Sigmoid colon (tissue), 7 donors: ENCODE measurements at regions of chr16 and their contacts with region 1.

Region 1: GRCh38 chr16:70746708-70747424 is 54.1 kb downstream of the VAC14 start:
- DNase-seq: peak; percentile 92
- H3K4me3 ChIP-seq: no peak overlapping the region
- H3K27ac ChIP-seq: peak overlapping the region; percentile 82 to 93 (median 87)
- H3K4me1 ChIP-seq: peaks cover 0 to 71% (median 69%) of the 10 kb centered on the region in 4 donors
- H3K27me3 ChIP-seq: no peaks in the 10 kb centered on the region
- CTCF ChIP-seq: no peak
- EP300 ChIP-seq: no peak
- POLR2A ChIP-seq: no peak

Region 2: DNA sequence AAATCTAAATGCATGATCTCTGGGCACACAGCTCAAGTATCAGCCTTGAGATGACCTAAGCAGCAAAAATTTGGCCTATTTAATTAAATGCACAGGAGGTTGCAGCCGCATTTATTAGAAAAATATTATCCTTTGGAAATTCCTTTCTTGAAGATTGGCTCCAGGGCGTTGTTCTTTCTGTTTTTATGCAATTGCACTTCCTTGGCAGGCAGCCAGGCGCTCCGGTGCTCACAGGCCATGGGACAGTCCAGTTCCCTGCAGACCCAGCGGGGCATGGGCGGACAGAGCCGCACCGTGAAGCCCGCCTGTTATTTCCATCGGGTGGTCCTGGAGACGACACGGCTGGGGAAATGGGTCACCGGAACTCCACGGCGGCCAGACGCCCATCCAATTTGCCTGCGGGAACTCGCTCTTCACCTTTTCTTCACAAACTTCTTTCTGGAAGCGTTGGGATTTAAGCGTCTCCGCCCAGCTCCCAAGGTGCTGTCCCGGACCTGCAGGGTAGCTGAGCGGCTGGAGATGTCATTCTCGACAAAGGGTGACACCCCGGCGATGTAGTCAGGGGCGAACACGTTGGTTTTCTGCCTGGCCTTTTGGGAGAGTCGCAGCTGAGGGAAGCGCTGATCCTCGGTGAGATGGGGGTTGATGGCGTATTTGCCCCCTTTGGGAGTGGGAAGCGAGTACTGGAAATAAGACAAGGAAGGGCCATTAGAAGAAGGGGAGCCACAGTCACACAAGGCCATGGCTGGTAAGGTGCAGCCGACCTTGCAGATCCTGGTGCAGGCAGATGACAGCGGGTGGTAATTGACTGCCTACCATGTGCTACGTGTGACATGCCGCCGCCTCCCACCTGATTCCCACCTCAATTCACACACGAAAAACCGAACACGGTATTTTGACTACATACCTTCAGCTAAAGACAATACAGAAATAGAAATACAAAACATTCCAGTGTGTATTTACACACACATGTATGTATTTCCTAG is 1004.7 kb before region 1 on chr16:
- intact Hi-C with region 1: loop called (anchors 10 kb)
- DNase-seq: peak; percentile 88
- H3K4me3 ChIP-seq: no peak overlapping the region
- H3K27ac ChIP-seq: peak overlapping the region in 2 of 4 donors; percentile 34 to 47
- H3K4me1 ChIP-seq: peaks cover 0 to 8% (median 0%) of the 10 kb centered on the region in 4 donors
- H3K27me3 ChIP-seq: no peaks in the 10 kb centered on the region
- CTCF ChIP-seq: no peak
- EP300 ChIP-seq: no peak
- POLR2A ChIP-seq: no peak

Region 3: DNA sequence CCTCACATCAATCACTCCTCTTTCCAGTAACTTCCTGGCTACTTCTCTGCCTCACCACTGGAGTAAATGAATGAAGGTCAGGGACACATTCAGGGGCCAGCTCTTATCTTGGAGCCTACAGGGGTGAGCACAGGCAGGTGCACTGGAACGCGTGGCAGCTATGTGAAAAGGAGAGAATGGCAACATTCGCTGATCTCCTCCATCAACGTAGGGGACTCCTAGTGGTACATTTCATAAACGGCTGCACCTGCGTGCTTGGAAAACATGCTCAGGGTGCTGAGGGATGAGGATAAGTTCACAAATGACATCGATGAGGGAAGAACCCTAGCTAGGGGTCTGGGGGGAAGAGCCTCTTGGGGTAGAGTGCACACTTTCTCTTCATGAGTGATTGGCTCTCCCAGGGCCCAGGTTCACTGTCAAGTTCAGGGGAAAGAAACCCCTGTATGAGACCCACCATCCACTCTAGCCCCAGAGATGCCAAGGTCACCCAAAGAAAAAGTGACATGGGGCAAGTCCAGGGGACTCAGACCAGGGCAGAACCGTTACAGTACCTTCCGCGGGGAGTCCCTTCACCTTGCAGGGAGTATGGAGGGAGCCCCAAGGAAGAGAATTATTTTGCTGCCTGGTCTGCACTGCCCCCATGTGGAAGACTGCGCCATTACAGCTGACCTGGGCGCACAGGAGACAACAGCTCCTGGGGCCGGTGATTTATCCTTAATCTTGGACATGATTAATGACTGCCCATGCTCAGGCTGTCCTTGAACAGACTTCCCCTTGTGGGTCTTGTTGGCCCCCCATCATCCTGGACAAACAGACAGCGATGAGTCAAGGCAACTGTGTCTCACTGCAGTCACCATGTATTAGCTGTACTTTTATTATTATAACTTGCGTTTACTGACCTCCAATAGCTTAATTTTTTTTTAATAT is 24.0 kb after region 1 on chr16:
- intact Hi-C with region 1: no loop called
- DNase-seq: no peak
- H3K4me3 ChIP-seq: no peak overlapping the region
- H3K27ac ChIP-seq: no peak overlapping the region
- H3K4me1 ChIP-seq: peaks cover 0 to 8% (median 6%) of the 10 kb centered on the region in 4 donors
- H3K27me3 ChIP-seq: no peaks in the 10 kb centered on the region
- CTCF ChIP-seq: peak; percentile 85 to 98 (median 94)
- EP300 ChIP-seq: no peak
- POLR2A ChIP-seq: no peak

Region 4: GRCh38 chr16:70781800-70782199 is 34.9 kb after region 1 on chr16:
- intact Hi-C with region 1: no loop called
- DNase-seq: no peak
- H3K4me3 ChIP-seq: no peak overlapping the region
- H3K27ac ChIP-seq: no peak overlapping the region
- H3K4me1 ChIP-seq: peaks cover 0 to 24% (median 23%) of the 10 kb centered on the region in 4 donors
- H3K27me3 ChIP-seq: no peaks in the 10 kb centered on the region
- CTCF ChIP-seq: no peak
- EP300 ChIP-seq: no peak
- POLR2A ChIP-seq: no peak